ENCODE measurements at regions of chr19 and their contacts with region 1.

Region 1: GRCh38 chr19:8513687-8514504 is at the start of gene ZNF414:
- DNase-seq: peak; percentile 99
- total RNA-seq, gene ZNF414: 15.9 to 16.0 TPM

Region 2: GRCh38 chr19:8257052-8257443 is 256.8 kb before region 1 on chr19:
- intact Hi-C with region 1: no loop called
- DNase-seq: no peak

Region 3: DNA sequence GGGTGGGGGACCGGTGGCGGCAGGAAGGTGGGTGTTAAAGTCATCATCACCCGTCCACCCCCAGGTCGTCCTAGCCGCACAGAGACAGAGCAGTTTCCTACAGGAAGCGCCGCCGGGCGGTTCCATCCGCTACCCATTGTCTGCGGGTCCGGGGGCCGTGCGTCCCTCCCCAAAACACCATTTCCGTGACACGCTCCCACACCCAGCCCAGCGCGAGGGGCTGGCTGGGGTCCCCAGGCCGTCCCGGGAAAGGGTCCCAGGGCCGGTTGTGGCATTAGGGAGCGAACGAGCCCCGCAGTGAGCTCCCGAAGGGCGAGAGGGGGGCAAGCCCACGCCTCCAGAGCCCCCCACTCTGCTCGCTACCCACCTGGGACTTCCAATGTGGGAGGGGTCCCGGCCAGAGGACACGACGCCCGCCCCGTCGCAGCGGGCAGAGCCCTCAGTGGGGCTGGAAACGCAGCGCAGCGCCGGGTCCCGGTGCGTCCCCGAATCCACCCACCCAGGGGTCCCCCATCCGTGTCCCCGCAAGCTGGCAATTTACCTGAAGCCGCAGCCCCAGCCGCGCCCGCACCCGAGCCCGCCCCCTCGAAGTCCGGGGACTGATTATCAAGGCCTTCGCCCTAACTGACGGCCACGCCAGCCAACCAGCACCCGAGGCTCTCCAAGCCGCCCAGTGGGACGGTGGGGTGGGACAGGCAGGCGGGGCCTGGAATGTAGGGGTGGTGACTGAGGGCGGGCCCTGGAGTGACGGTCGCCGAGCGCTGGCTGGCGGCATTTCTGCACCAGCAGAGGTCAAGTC is 171.0 kb before region 1 on chr19 and contains the start of gene KANK3:
- intact Hi-C with region 1: loop called in 1 of 2 experiments (anchors 10 kb)
- DNase-seq: peak; percentile 98
- total RNA-seq, gene KANK3: 11.0 to 22.5 TPM

Region 4: DNA sequence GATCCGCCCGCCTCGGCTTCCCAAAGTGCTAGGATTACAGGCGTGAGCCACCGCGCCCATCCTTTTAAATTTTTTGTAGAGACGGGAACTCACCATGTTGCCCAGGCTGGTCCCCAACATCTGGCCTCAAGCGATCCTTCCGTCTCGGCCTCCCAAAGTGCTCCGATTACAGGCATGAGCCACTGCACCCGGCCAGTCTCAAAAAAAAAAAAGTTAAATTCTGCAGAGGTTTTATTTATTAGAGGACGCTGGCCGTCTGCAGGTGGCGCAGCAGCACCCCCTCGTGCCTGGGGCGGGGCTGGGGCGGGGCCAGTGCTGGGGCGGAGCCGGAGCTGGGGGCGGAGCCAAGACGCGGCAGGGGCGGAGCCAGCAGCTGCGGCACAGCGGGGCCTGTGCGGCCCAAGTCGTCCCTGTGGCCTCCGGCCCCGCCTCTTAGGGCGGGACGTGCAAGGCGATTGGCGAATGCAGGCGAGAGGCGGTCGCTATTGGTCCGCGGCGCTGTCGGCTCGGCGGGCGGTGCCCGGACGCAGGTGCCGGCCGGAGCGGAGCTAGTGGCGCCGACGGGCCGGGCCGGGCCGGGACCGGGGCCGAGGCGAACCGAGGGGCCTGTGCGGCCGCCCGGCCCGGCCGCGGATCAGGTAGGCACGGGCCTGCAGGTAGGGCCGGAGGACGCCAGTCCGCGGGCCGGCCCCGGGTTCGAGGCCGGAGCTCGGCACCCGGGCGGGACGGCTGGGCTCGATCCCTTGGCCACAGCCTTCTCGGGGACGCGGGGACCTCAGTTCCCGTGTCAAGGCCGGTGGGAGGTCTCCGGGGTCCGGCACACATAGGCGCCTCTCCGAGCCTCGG is 100.9 kb before region 1 on chr19 and contains the start of gene MARCHF2:
- intact Hi-C with region 1: loop called in 1 of 2 experiments (anchors 5 kb)
- DNase-seq: peak; percentile 99
- total RNA-seq, gene MARCHF2: 50.3 to 57.6 TPM

Region 5: DNA sequence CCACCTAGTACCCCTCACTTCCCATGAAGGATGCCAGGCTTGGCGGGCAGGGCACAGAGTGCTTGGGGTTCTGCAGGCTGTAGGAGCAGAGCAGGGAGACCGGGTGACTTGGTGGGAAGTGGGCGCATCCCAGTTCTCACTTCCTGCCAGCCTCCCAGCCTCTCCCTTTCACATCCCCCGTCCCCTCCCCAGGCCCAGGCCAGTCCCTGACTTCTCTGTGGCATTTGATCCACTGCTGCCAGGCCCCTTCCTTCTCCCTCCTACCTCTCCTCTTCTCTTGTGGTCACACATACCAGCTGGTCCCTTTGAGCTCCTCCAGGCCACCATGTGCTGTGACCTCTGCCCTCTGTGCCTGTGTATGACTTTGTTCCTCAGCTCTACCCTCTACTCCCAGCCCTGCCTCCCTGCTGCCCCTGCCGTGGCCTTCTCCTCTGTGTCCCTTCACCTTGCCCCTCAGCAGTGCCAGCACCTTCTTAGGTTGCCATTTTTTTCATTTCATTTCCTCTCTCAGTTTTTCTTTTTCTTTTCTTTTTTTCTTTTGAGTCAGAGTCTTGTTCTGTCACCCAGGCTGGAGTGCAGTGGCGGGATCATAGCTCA is 43.8 kb after region 1 on chr19:
- intact Hi-C with region 1: no loop called
- DNase-seq: no peak

Measured in posterior vena cava (tissue), 2 donors.